Activated naive CD4-positive, alpha-beta T cell treated with anti-CD3 and anti-CD28 coated beads for 36 hours (primary cell): ENCODE measurements at regions of chr20 and their contacts with region 1.

Region 1: GRCh38 chr20:56411759-56412472 is at the start of gene CASS4:
- DNase-seq: peak; percentile 63
- H3K4me3 Mint-ChIP-seq: peak within 1 kb of the TSS; percentile 89
- H3K27ac Mint-ChIP-seq: peak within 1 kb of the TSS; percentile 98
- H3K4me1 Mint-ChIP-seq: peaks cover 62% of the 10 kb centered on the region
- H3K27me3 Mint-ChIP-seq: no peaks in the 10 kb centered on the region
- total RNA-seq, gene CASS4: 5.1 to 5.2 TPM

Region 2: GRCh38 chr20:56358596-56359211 is 53.2 kb before region 1 on chr20 and contains the start of gene FAM210B:
- CTCF ChIA-PET with region 1: no interaction called
- intact Hi-C with region 1: no loop called
- DNase-seq: peak; percentile 82
- H3K4me3 Mint-ChIP-seq: peak within 1 kb of the TSS; percentile 86
- H3K27ac Mint-ChIP-seq: peak within 1 kb of the TSS; percentile 53
- H3K4me1 Mint-ChIP-seq: peaks cover 16% of the 10 kb centered on the region
- H3K27me3 Mint-ChIP-seq: no peaks in the 10 kb centered on the region
- total RNA-seq, gene FAM210B: 7.5 to 8.2 TPM

Region 3: DNA sequence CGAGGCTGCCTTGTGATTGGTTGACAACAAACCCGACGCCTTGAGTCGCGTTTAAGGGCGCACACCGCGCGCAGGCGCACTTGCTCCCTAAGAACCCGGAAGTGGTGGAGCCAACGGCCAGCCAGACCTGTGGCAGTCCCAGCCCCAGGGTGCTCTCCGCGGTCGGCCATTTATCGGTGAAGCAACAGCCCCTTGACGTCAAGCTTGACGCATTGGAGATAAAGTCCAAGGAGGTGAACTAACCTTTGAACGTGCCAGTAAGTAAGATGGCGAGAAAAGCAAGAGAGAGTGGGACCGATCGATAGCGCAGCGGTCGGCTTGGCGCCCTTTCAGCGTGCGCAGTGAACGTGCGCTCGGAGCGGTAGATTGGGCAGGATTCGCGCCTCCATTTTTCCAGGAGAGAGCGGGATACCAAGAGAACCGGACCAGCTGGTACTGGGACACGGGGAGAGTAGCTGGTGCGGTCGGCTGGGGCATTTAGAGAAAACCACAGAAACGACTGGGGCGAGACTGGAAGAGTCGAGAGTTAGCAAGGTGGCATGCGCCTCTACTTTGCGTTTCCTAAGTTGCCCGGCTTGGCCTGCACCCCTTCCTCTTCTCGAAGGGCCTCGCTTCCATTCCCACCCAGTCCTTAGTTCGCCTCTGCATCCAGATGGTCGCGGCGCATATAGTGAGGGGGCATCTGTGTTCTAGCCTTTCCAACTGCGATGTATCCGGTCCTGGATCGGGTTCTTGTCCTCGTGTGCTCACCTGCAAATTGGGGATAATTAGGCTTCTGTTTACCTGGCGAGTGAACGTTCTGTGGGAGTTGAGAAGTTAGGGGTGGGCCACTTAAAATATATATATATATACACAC is 19.4 kb before region 1 on chr20 and contains the start of gene CSTF1:
- CTCF ChIA-PET with region 1: interaction called, 11 read pairs
- intact Hi-C with region 1: loop called (anchors 1 kb)
- DNase-seq: peak; percentile 100
- H3K4me3 Mint-ChIP-seq: no peak within 1 kb of the TSS
- H3K27ac Mint-ChIP-seq: no peak within 1 kb of the TSS
- H3K4me1 Mint-ChIP-seq: peaks cover 33% of the 10 kb centered on the region
- H3K27me3 Mint-ChIP-seq: no peaks in the 10 kb centered on the region
- total RNA-seq, gene CSTF1: 68.0 to 70.7 TPM

Region 4: DNA sequence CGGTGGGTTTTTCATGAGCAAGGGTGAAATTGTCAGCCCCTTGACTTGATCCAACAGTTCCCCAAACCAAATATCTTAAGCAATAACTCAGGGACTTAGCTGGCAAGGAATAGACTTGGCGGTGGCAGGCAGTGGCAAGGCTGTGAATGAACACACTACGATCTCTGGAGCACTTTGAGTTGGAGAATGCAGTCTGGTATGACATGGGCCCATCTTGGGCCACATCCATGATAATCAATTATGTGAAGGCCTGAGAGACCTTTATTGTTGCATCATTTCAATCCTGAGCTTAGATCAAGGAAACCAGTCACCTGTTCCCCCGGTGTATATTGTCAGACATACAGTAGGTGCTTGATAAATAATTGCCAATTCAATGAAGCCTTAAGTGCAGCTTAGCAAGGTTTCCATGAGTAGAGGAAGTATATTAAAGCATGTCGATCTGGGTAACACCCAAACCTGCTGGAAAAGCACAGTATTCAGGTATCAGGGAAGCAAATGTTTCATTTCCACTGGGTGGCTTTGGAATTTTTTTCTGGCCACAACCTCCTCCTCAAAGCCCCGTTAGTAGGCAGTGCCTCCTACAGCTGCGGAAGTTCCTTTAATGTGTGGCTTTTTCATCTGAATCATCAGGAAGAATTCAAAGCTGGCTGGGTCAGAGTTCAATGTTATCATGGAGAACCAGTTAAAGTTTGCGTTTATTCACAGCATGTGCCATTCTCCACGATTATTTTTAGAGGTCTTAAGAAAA is 10.3 kb after region 1 on chr20:
- CTCF ChIA-PET with region 1: interaction called, 4 read pairs
- intact Hi-C with region 1: loop called (anchors 1 kb)
- DNase-seq: no peak
- H3K4me3 Mint-ChIP-seq: peak overlapping the region; percentile 19
- H3K27ac Mint-ChIP-seq: peak overlapping the region; percentile 80
- H3K4me1 Mint-ChIP-seq: peaks cover 66% of the 10 kb centered on the region
- H3K27me3 Mint-ChIP-seq: no peaks in the 10 kb centered on the region

Region 5: DNA sequence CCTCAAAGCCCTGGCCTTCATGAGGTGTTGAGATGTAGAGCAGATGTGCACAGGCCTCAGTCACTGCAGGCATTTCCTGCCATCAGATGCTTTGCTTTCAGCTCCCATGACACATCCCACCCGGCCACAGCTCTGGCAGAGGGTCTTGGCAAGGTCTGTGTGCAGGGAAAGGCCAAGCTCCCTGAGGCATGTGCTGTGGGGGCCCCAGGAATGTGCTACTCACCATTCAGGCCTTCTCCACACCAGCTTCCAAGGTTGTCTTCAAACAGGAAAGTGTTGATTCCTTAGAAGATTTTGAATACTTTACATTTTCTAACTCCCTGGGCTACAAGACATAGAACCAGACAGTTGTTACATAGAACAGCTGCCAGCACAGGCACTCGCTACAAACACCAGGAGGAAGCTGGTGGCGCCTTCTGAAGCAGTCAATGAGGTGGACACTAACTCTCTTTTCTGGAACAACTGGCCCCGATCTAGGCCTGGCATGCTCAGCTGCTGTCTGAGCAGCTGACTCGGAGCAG is 27.9 kb after region 1 on chr20:
- CTCF ChIA-PET with region 1: interaction called, 3 read pairs
- intact Hi-C with region 1: loop called (anchors 1 kb)
- DNase-seq: peak; percentile 38
- H3K4me3 Mint-ChIP-seq: no peak overlapping the region
- H3K27ac Mint-ChIP-seq: peak overlapping the region; percentile 77
- H3K4me1 Mint-ChIP-seq: peaks cover 40% of the 10 kb centered on the region
- H3K27me3 Mint-ChIP-seq: no peaks in the 10 kb centered on the region

Region 6: DNA sequence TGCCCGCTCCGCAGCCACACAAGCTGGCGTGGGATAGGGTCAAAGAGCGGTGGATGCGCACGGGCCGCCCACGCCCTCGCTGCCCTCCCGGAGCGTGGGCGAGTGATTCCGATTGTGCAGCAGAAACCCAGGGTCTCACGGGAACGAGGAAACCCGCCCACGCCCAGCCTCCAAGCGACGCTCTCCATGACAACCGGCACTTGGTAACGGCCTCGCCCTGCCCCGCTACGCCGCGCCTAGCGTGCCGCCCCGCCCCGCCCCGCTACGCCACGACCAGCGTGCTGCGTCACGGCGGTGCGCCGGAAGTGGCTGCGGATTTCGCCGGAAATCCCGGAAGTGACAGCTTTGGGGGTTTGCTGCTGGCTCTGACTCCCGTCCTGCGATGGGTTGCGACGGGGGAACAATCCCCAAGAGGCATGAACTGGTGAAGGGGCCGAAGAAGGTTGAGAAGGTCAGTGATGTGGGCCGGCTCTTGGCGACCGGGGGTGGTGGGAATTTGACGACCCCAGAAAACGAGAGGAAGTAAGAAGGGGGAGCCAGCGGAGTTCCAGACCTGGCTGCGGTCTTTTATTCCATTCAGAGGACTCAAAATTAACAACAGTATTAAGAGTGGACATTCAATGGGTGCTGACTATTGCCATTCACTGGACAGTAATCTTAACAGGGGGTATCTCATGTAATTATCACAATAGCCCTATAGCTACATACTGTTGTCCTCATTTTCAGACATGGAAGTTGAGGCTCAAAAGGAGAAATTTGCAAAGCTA is 56.6 kb after region 1 on chr20 and contains the start of gene RTF2:
- CTCF ChIA-PET with region 1: interaction called, 3 read pairs
- intact Hi-C with region 1: loop called (anchors 1 kb)
- DNase-seq: peak; percentile 95
- H3K4me3 Mint-ChIP-seq: peak within 1 kb of the TSS; percentile 100
- H3K27ac Mint-ChIP-seq: peak within 1 kb of the TSS; percentile 98
- H3K4me1 Mint-ChIP-seq: peaks cover 29% of the 10 kb centered on the region
- H3K27me3 Mint-ChIP-seq: no peaks in the 10 kb centered on the region
- total RNA-seq, gene RTF2: 76.8 to 82.9 TPM

Region 7: GRCh38 chr20:56636716-56637115 is 224.8 kb after region 1 on chr20:
- CTCF ChIA-PET with region 1: no interaction called
- intact Hi-C with region 1: no loop called
- DNase-seq: no peak
- H3K4me3 Mint-ChIP-seq: no peak overlapping the region
- H3K27ac Mint-ChIP-seq: no peak overlapping the region
- H3K4me1 Mint-ChIP-seq: no peaks in the 10 kb centered on the region
- H3K27me3 Mint-ChIP-seq: peaks cover 33% of the 10 kb centered on the region

Region 8: GRCh38 chr20:56769870-56770600 is 358.1 kb after region 1 on chr20:
- CTCF ChIA-PET with region 1: no interaction called
- intact Hi-C with region 1: no loop called
- DNase-seq: no peak
- H3K4me3 Mint-ChIP-seq: no peak overlapping the region
- H3K27ac Mint-ChIP-seq: no peak overlapping the region
- H3K4me1 Mint-ChIP-seq: no peaks in the 10 kb centered on the region
- H3K27me3 Mint-ChIP-seq: peaks cover 5% of the 10 kb centered on the region

Region 9: DNA sequence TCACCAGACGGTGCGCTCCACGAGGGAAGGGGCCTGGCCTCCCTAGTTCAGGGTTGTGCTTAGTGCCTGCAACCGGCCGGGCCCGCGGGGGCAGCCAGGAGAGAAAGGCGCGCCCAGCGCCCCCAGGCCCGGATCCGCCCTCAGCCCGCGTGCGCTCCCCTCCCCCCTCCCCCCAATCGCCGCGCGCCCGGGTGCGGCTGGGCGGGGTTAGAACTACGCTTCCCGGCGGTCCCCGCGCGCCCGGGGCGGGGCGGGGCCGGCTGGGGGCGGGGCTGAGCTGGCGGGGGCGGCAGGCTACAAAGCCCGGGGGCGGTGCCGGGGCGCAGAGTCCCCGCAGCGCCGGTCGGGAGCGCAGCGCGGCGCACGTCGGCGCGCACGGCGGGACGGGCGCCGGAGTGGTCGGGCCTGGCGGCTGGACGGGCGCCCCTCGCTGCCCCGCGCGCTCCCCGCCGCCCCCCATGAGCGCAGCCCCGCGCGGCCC is 979.2 kb after region 1 on chr20 and contains the start of gene RBM38:
- CTCF ChIA-PET with region 1: no interaction called
- intact Hi-C with region 1: loop called (anchors 5 kb)
- DNase-seq: peak; percentile 80
- H3K4me3 Mint-ChIP-seq: peak within 1 kb of the TSS; percentile 90
- H3K27ac Mint-ChIP-seq: peak within 1 kb of the TSS; percentile 97
- H3K4me1 Mint-ChIP-seq: peaks cover 46% of the 10 kb centered on the region
- H3K27me3 Mint-ChIP-seq: no peaks in the 10 kb centered on the region
- total RNA-seq, gene RBM38: 60.3 to 63.1 TPM